ENCODE measurements at regions of chr16 and their contacts with region 1.

Region 1: DNA sequence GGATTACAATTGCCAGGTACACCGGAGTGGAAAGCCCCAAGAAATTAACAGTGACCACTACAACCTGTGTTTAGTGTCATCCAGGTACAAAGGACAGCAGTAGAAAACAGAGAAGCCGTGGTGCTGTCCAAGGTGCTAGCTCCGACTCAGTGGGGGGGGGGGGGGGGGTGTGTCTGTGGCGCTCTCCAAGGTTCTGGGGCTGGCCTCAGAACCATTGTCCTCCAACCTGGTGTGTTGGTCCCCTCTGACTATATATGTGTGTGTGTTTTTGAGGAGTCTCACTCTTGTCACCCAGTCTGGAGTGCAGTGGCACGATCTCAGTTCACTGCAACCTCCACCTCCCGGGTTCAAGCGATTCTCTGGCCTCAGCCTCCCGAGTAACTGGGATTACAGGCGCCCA is 5.8 kb upstream of the ZNF23 start:
- DNase-seq: no peak

Region 2: DNA sequence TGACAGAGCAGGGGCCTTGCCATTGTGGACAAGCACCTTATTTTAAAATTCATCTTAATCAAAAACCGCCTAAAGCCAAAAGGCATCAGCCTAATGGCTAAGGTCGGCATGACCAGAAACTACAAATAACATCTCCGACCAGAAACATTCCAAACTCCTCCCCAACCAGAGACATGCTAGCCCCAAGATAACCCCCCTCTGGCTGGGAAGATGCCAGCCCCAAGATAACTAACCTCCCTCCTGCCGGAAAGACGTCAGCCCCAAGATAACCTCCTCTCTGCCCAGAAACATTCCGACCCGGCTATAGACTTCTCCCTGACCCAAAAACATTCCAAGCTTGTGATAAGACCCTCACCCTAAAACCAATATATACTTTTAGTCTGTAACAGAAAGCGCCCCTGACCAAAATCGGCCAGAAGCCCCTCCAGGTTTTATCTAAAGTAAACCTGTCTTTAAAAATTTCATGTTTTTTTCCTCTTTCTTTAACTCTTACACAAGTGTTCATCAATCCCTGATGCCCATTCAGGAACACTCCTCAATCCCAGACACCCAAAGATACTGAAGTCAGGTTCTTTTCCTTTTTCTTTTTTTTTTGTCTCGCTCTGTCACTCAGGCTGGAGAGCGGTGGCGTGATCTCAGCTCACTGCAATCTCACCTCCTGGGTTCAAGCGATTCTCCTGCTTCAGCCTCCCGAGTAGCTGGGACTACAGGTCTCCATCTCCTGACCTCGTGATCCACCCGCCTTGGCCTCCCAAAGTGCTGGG is 58.6 kb before region 1 on chr16:
- in situ Hi-C with region 1: loop called (anchors 5 kb)
- DNase-seq: no peak

Measured in G401 (cell line).